Activated CD4-positive, alpha-beta memory T cell treated with anti-CD3 and anti-CD28 coated beads, Interleukin-2, amount 10 ng/mL, durations not matched to agents 7 days and 5 days (primary cell): ENCODE measurements at regions of chr2 and their contacts with region 1.

Region 1: DNA sequence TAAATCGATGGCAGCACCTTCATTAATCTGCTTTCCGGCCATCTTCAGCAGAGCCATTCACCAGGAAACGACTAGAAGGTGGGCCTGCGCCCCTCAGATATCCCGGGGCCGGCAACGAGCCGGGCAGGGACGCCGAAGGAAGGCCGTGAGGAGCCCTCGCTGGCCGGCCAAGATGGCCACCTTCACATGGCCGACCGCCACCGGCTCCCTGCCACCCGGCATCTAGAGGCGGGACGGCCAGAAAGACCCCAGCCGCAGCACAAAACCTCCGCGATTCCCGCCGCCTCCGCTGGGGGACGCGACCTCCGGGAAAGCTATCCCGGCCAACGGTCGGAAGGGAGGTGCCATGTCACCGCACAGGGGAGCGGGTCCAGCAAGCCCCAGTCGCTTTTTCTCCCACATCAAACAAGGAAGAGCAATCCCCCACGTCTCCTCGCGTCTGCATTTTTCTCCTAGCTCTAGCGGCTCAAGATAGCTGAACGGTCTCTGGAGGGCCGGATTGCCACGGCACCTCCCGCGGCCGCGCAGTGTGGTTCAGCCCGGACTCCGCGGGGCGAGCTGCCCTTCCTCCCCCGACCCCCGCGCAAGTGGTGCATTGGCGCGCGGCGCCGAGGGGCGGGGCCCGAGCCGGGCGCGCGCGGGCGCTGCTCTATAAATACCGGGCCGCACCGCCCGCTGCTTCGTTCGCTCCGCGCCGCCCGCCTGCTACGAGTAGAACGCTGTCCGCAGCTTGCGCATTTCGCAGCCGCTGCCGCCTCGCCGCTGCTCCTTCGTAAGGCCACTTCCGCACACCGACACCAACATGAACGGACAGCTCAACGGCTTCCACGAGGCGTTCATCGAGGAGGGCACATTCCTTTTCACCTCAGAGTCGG is at the start of gene MAT2A:
- DNase-seq: peak; percentile 89
- H3K4me3 Mint-ChIP-seq: peak within 1 kb of the TSS; percentile 94
- H3K27ac Mint-ChIP-seq: peak within 1 kb of the TSS; percentile 94
- H3K4me1 Mint-ChIP-seq: peaks cover 48% of the 10 kb centered on the region
- H3K27me3 Mint-ChIP-seq: no peaks in the 10 kb centered on the region
- total RNA-seq, gene MAT2A: 196 to 199 TPM

Region 2: GRCh38 chr2:85327822-85328617 is 210.7 kb before region 1 on chr2 and contains the start of gene TGOLN2:
- CTCF ChIA-PET with region 1: interaction called, 4 read pairs
- POLR2A ChIA-PET with region 1: interaction called, 94 read pairs
- DNase-seq: peak; percentile 95
- H3K4me3 Mint-ChIP-seq: peak within 1 kb of the TSS; percentile 93
- H3K27ac Mint-ChIP-seq: peak within 1 kb of the TSS; percentile 100
- H3K4me1 Mint-ChIP-seq: peaks cover 48% of the 10 kb centered on the region
- H3K27me3 Mint-ChIP-seq: no peaks in the 10 kb centered on the region
- total RNA-seq, gene TGOLN2: 129 to 131 TPM

Region 3: GRCh38 chr2:85409845-85410583 is 128.7 kb before region 1 on chr2 and contains the start of gene CAPG:
- CTCF ChIA-PET with region 1: no interaction called
- POLR2A ChIA-PET with region 1: interaction called, 14 read pairs
- DNase-seq: peak; percentile 72
- H3K4me3 Mint-ChIP-seq: peak within 1 kb of the TSS; percentile 78
- H3K27ac Mint-ChIP-seq: peak within 1 kb of the TSS; percentile 73
- H3K4me1 Mint-ChIP-seq: peaks cover 76% of the 10 kb centered on the region
- H3K27me3 Mint-ChIP-seq: peaks cover 3% of the 10 kb centered on the region
- total RNA-seq, gene CAPG: 167 to 177 TPM

Region 4: DNA sequence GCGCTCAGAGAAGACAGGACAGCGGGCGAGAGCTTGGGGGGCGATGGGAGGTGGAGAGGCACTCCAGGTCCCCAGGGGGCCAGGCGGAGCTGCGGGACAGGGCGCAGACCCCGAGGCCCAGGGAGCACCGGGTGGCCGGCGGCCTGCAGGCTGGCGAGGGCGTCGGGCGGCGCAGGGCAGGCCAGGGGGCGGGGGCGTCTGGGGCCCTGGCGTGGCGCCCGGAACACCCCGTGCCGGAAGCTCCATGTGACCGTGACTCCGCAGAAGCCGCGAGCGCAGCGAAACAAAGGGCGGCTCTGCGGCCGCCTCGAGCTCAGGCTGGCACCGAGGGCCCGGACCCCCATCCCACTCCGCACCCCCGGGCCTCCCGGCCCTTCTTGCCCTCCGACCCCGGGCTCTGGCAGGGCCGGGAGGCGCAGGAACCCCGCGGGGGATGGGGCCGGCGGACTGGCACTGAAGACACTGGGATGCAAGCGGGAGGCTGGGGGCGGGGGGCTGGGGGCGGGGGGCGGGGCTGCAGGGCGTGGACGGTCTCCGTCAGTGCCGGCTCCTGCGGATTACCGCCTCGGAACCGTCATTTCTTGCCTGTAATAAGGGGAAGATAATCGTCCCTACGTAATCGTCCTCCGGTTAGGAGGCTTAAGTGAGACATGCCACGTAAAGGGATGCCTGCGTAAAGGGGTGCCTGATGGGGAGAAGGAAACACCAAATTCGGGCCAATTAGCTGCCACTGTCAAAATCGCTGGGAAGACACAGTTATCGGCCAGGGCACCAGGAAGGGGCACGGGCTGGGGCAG is 101.0 kb before region 1 on chr2:
- CTCF ChIA-PET with region 1: interaction called, 10 read pairs
- POLR2A ChIA-PET with region 1: interaction called, 143 read pairs
- DNase-seq: peak; percentile 81
- H3K4me3 Mint-ChIP-seq: peak overlapping the region; percentile 77
- H3K27ac Mint-ChIP-seq: peak overlapping the region; percentile 89
- H3K4me1 Mint-ChIP-seq: peaks cover 40% of the 10 kb centered on the region
- H3K27me3 Mint-ChIP-seq: no peaks in the 10 kb centered on the region

Region 5: GRCh38 chr2:85551698-85552678 is 13.3 kb after region 1 on chr2:
- CTCF ChIA-PET with region 1: interaction called, 36 read pairs
- POLR2A ChIA-PET with region 1: interaction called, 80 read pairs
- DNase-seq: peak; percentile 91
- H3K4me3 Mint-ChIP-seq: no peak overlapping the region
- H3K27ac Mint-ChIP-seq: peak overlapping the region; percentile 7
- H3K4me1 Mint-ChIP-seq: peaks cover 5% of the 10 kb centered on the region
- H3K27me3 Mint-ChIP-seq: no peaks in the 10 kb centered on the region

Region 6: GRCh38 chr2:85584857-85585783 is 46.4 kb after region 1 on chr2:
- CTCF ChIA-PET with region 1: interaction called, 5 read pairs
- POLR2A ChIA-PET with region 1: interaction called, 28 read pairs
- DNase-seq: peak; percentile 29
- H3K4me3 Mint-ChIP-seq: peak overlapping the region; percentile 91
- H3K27ac Mint-ChIP-seq: peak overlapping the region; percentile 89
- H3K4me1 Mint-ChIP-seq: peaks cover 58% of the 10 kb centered on the region
- H3K27me3 Mint-ChIP-seq: no peaks in the 10 kb centered on the region